Common myeloid progenitor, CD34-positive (primary cell): ENCODE measurements at regions of chr18 and their contacts with region 1.

Region 1: DNA sequence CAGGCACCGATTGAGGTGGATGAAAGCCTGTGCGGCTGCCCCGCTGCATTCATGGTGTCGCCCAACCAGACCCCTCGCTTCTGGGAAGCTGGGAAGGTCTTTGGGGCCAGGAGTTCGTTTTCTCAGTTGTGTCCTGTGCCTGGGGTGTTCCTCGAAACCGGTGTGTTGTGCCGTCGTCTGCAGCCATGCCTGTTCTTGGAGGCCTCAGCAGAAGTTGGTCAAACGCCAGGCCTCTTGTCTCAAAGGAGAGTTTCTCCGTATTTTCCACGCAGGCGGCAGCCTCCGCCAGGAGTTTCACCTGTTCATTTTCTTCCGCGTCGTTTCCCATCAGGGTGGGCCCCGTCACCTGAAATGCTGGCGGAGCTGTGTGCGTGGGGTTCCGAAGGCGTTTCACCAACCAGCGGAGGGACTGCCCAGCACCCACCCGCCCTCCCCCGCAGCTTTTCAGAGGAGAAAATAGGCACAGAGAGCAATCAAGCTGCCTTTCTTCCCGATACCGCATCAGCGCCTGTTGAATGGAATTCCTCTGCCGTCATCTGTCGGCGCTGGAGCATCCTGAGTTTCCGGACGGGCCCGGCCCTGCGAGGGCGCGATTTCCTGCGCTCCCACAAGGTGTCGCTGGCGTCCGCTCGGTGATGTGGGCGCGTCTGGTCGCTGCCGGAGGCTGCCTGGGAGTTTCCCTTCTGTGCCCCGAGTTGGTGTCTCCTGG is 17.0 kb upstream of the NFATC1 start:
- DNase-seq: peak; percentile 61 to 83 (median 78)
- H3K4me3 ChIP-seq: peak overlapping the region in 2 of 7 experiments; percentile 4 to 45
- H3K27ac ChIP-seq: no peak overlapping the region
- H3K4me1 ChIP-seq: peaks cover 0 to 7% (median 4%) of the 10 kb centered on the region in 4 experiments
- H3K27me3 ChIP-seq: no peaks in the 10 kb centered on the region

Region 2: GRCh38 chr18:79393635-79394533 is 15.2 kb after region 1 on chr18:
- CTCF ChIA-PET with region 1: interaction called, 75 read pairs
- POLR2A ChIA-PET with region 1: no interaction called
- DNase-seq: peak; percentile 85 to 92 (median 90)
- H3K4me3 ChIP-seq: peak overlapping the region; percentile 35 to 71 (median 62)
- H3K27ac ChIP-seq: peak overlapping the region; percentile 78 to 88
- H3K4me1 ChIP-seq: peaks cover 0 to 58% (median 43%) of the 10 kb centered on the region in 4 experiments
- H3K27me3 ChIP-seq: peaks cover 0 to 35% (median 10%) of the 10 kb centered on the region in 5 experiments

Region 3: DNA sequence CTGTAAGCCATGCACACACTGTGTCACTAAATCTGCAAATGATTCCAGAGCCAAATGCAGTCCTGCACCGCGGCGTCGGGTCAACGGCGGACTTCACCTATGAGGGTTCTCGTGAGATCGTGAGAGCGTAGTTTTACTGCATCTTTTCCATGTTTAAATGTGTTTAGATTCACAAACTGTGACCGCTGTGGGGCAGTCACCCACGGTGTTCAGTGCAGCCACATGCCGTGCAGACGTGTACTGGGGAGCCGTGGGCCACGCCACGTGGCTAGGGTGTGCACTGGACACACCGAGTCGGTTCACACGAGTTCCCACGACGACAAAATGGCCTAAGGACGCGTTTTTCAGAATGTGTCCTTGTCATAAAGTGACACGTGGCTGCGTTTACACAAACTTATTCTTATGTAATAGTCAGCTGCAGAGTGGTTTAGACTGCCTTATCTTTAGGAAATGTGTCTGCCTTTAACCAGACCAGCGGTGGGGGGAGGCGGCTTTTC is 51.1 kb after region 1 on chr18:
- CTCF ChIA-PET with region 1: interaction called, 10 read pairs
- POLR2A ChIA-PET with region 1: no interaction called
- DNase-seq: peak; percentile 50 to 82 (median 69)
- H3K4me3 ChIP-seq: no peak overlapping the region
- H3K27ac ChIP-seq: no peak overlapping the region
- H3K4me1 ChIP-seq: peaks cover 0 to 16% (median 8%) of the 10 kb centered on the region in 4 experiments
- H3K27me3 ChIP-seq: no peaks in the 10 kb centered on the region

Region 4: DNA sequence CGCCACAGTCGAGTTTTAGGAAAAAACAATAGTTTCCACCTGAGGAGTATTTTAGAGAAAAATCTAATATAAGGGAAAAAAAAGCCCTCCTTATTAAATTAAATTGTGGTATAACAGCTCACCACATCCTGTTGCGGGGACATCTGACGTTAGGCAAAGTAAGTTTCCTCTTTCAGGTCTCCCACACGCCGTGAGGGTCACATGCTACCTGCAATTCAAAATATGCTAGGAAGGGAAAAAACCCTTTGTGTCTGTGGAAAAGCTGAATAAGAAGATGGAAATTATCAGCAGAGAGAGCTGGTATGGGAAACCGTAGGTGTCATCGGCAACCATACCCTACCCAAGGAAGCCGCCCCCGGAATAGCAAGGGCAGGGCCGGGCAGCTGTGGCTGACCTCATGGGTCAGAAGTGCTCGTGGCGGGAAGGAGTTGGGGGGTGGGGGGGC is 145.1 kb after region 1 on chr18:
- CTCF ChIA-PET with region 1: interaction called, 164 read pairs
- POLR2A ChIA-PET with region 1: no interaction called
- DNase-seq: peak; percentile 91 to 95 (median 94)
- H3K4me3 ChIP-seq: peak overlapping the region in 5 of 7 experiments; percentile 19 to 55 (median 49)
- H3K27ac ChIP-seq: peak overlapping the region in 1 of 2 experiments; percentile 43
- H3K4me1 ChIP-seq: peaks cover 6 to 65% (median 45%) of the 10 kb centered on the region in 4 experiments
- H3K27me3 ChIP-seq: no peaks in the 10 kb centered on the region

Region 5: GRCh38 chr18:79528846-79529245 is 150.2 kb after region 1 on chr18:
- CTCF ChIA-PET with region 1: interaction called, 164 read pairs
- POLR2A ChIA-PET with region 1: no interaction called
- DNase-seq: peak; percentile 70 to 85 (median 75)
- H3K4me3 ChIP-seq: no peak overlapping the region
- H3K27ac ChIP-seq: no peak overlapping the region
- H3K4me1 ChIP-seq: peaks cover 0 to 21% (median 14%) of the 10 kb centered on the region in 4 experiments
- H3K27me3 ChIP-seq: no peaks in the 10 kb centered on the region

Region 6: GRCh38 chr18:79644006-79644665 is 265.4 kb after region 1 on chr18:
- CTCF ChIA-PET with region 1: interaction called, 136 read pairs
- POLR2A ChIA-PET with region 1: no interaction called
- DNase-seq: peak; percentile 70 to 81 (median 70)
- H3K4me3 ChIP-seq: peak overlapping the region in 2 of 7 experiments; percentile 6 to 33
- H3K27ac ChIP-seq: no peak overlapping the region
- H3K4me1 ChIP-seq: peaks cover 14 to 26% (median 22%) of the 10 kb centered on the region in 4 experiments
- H3K27me3 ChIP-seq: peaks cover 0 to 2% (median 0%) of the 10 kb centered on the region in 5 experiments